PC-9 (cell line): ENCODE measurements at regions of chr15 and their contacts with region 1.

Region 1: GRCh38 chr15:74438721-74439316 is 5.1 kb upstream of the SEMA7A start:
- DNase-seq: peak; percentile 66 to 78
- H3K4me3 ChIP-seq: no peak overlapping the region
- H3K27ac ChIP-seq: no peak overlapping the region
- H3K4me1 ChIP-seq: 0 out of 2 replicates have a peak, but pooled peaks cover 6% of the 10 kb centered on the region
- H3K27me3 ChIP-seq: no peaks in the 10 kb centered on the region
- CTCF ChIP-seq: peak; percentile 87

Region 2: DNA sequence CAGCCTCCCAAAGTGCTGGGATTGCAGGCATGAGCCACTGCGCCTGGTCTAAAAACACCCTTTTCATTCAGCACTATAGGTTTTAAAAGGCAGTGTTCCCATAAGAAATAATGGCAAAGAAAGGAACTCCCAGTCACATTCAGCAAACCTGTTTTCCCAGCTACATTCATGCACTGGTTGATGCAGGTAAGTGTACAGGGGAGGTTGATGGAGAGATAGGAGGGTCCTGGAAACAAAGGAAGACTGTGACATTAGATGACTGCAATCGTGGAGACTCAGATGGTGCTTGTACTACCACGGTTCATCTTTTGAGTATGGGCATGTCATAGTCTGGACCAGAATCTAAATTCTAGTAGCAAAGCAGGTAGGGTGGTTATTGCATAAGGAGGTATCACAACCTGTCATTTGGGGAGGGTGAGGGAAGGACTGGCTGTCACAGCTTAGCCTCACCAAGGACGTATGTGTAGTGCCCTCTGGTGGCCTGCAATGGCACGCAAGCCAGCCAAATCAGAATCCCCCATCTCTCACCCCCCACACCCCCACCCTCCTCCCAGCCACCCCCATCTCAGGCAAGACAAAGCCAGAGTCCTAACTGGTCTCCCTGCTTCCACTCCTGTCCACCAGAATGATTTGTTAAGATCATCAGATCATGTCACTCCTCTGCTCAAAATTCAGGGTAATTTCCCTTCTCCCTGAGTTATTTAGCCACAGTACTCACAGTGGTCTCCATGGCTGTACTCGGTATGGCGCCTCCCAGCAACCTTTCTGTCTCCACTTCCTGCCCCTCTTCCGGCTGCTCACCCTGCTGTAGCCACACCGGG is 50.9 kb after region 1 on chr15:
- CTCF ChIA-PET with region 1: interaction called, 17 read pairs
- POLR2A ChIA-PET with region 1: no interaction called
- intact Hi-C with region 1: no loop called
- DNase-seq: peak; percentile 48 to 57
- H3K4me3 ChIP-seq: no peak overlapping the region
- H3K27ac ChIP-seq: no peak overlapping the region
- H3K4me1 ChIP-seq: no peaks in the 10 kb centered on the region
- H3K27me3 ChIP-seq: no peaks in the 10 kb centered on the region
- CTCF ChIP-seq: peak; percentile 66